ENCODE measurements at regions of chr12 and their contacts with region 1.

Region 1: GRCh38 chr12:56189176-56189917 is at the start of gene SMARCC2:
- DNase-seq: peak; percentile 92 to 95
- H3K4me3 ChIP-seq: peak within 1 kb of the TSS; percentile 85 to 98 (median 90)
- H3K27ac ChIP-seq: peak within 1 kb of the TSS; percentile 93 to 98 (median 95)
- H3K4me1 ChIP-seq: peaks cover 14 to 34% (median 22%) of the 10 kb centered on the region in 4 donors
- H3K27me3 ChIP-seq: no peaks in the 10 kb centered on the region
- CTCF ChIP-seq: peak in 5 of 7 experiments; percentile 27 to 82 (median 64)
- EP300 ChIP-seq: no peak
- POLR2A ChIP-seq: no peak
- total RNA-seq, gene SMARCC2: 58.0 to 131 (median 72.1) TPM

Region 2: GRCh38 chr12:55673638-55674037 is 515.7 kb before region 1 on chr12:
- intact Hi-C with region 1: no loop called
- DNase-seq: no peak
- H3K4me3 ChIP-seq: no peak overlapping the region
- H3K27ac ChIP-seq: no peak overlapping the region
- H3K4me1 ChIP-seq: no peaks in the 10 kb centered on the region
- H3K27me3 ChIP-seq: no peaks in the 10 kb centered on the region
- CTCF ChIP-seq: no peak
- EP300 ChIP-seq: no peak
- POLR2A ChIP-seq: no peak

Region 3: DNA sequence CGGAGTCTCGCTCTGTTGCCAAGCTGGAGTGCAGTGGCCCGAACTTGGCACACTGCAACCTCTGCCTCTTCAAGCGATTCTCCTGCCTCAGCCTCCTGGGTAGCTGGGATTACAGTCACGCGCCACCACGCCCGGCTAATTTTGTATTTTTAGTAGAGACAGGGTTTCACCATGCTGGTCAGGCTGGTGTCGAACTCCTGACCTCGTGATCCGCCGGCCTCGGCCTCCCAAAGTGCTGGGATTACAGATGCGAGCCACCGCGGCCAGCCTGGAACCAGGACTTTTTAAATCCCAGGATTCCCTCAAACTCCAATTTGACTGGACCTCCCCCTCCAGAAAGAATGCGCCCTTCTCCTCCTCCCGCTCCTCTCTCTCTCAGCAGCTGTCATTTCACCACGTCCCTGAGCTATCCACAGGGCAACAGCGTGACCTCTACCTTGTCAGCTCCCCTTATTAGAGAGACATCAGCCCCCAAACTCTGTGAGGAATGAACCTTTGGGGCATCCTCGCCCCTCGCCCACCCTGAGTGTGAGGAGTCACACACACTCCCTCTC is 59.3 kb before region 1 on chr12:
- intact Hi-C with region 1: loop called (anchors 5 kb)
- DNase-seq: no peak
- H3K4me3 ChIP-seq: peak overlapping the region; percentile 67 to 93 (median 77)
- H3K27ac ChIP-seq: peak overlapping the region in 4 of 5 donors; percentile 88 to 97 (median 94)
- H3K4me1 ChIP-seq: peaks cover 28 to 47% (median 44%) of the 10 kb centered on the region in 4 donors
- H3K27me3 ChIP-seq: no peaks in the 10 kb centered on the region
- CTCF ChIP-seq: no peak
- EP300 ChIP-seq: no peak
- POLR2A ChIP-seq: no peak